Psoas muscle (tissue), 8 donors: ENCODE measurements at regions of chr17 and their contacts with region 1.

Region 1: GRCh38 chr17:77319211-77320043 is 178.7 kb downstream of the SEC14L1 start:
- DNase-seq: peak; percentile 91 to 92
- ATAC-seq: peak; percentile 76 to 81 (median 80)
- H3K4me3 ChIP-seq: peak overlapping the region; percentile 66
- H3K27ac ChIP-seq: peak overlapping the region; percentile 81
- H3K4me1 ChIP-seq: peaks cover 47% of the 10 kb centered on the region
- H3K27me3 ChIP-seq: no peaks in the 10 kb centered on the region
- CTCF ChIP-seq: no peak

Region 2: GRCh38 chr17:77287432-77288071 is 31.9 kb before region 1 on chr17:
- intact Hi-C with region 1: loop called (anchors 1 to 5 kb)
- DNase-seq: peak; percentile 82 to 92
- ATAC-seq: peak; percentile 76 to 82 (median 80)
- H3K4me3 ChIP-seq: peak overlapping the region; percentile 65
- H3K27ac ChIP-seq: peak overlapping the region; percentile 97
- H3K4me1 ChIP-seq: peaks cover 27% of the 10 kb centered on the region
- H3K27me3 ChIP-seq: no peaks in the 10 kb centered on the region
- CTCF ChIP-seq: no peak